GM12878 (cell line): ENCODE measurements at regions of chr2 and their contacts with region 1.

Region 1: DNA sequence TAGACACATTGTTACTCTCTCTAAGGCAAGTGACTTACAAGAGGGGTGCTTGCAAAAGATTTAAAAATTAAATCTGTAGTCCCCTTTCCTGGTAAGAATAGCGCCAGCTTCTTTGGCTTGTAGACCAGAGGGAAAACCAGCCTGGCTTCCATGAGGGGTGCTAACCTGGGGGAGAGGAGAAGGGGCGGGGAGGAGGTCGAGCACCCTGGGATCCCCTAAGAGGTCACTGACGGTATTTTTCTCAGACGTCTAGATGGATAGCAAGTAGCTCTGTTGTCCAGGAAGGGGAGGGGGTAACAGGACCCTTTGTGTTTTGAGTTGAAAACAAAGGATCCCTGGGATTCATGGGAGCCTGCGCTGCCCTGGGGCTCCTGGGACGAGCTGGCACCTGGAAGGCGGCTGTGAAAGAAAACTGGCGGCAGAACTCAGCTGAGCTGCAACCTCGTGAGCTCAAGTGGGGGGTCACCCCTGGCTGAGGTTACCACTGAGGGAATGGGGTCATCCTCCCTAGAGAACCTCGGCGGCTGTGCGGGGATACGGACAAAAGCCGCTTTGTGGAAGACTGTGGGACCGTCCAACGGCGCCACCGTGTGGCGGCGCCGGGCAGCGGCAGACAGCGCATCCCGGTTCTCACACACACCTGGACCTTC is 37.8 kb upstream of the MRPL19 start:
- DNase-seq: no peak
- ATAC-seq: peak; percentile 97
- H3K4me3 ChIP-seq: peak overlapping the region; percentile 49; the same call in 1 of the 2 replicates
- H3K27ac ChIP-seq: no peak overlapping the region
- H3K4me1 ChIP-seq: 0 out of 2 replicates have a peak, but pooled peaks cover 2% of the 10 kb centered on the region
- H3K27me3 ChIP-seq: no peaks in the 10 kb centered on the region
- CTCF ChIP-seq: peak; percentile 96 to 98 (median 98)
- EP300 ChIP-seq: no peak
- POLR2A ChIP-seq: no peak
- RAD21 ChIP-seq: peak; percentile 88

Region 2: GRCh38 chr2:74919827-74920226 is 689.0 kb before region 1 on chr2:
- CTCF ChIA-PET with region 1: interaction called, 21 read pairs
- POLR2A ChIA-PET with region 1: no interaction called
- RAD21 ChIA-PET with region 1: interaction called, 13 read pairs
- SMC1A ChIA-PET with region 1: interaction called, 5 read pairs
- in situ Hi-C with region 1: loop called (anchors 5 kb)
- intact Hi-C with region 1: loop called (anchors 5 kb)
- DNase-seq: no peak
- ATAC-seq: peak; percentile 77
- H3K4me3 ChIP-seq: no peak overlapping the region
- H3K27ac ChIP-seq: no peak overlapping the region
- H3K4me1 ChIP-seq: peaks cover 6% of the 10 kb centered on the region; the same call in 1 of the 2 replicates
- H3K27me3 ChIP-seq: no peaks in the 10 kb centered on the region
- CTCF ChIP-seq: peak; percentile 69 to 85 (median 84)
- EP300 ChIP-seq: no peak
- POLR2A ChIP-seq: no peak
- RAD21 ChIP-seq: peak; percentile 95

Region 3: DNA sequence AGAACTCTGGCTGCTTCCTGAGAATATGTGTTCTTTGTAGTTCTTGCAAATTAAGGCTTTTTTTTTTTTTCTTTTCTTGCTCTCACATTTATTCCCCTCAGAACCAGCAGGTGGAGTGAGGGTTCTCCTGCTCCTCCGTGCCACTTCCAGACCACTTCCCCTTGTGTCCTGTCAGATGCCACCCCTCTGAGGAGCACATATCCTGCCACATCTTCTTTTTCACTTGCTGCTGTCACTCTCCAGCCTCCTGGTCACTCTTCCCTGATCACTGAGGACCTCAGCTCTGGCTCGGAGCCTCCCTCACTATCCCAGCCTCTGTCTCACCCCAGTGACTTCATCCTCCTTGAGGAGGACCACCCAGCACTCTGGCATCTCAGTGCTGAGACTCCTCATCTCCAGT is 510.0 kb before region 1 on chr2:
- CTCF ChIA-PET with region 1: interaction called, 10 read pairs
- POLR2A ChIA-PET with region 1: no interaction called
- RAD21 ChIA-PET with region 1: interaction called, 6 read pairs
- SMC1A ChIA-PET with region 1: interaction called, 4 read pairs
- in situ Hi-C with region 1: no loop called
- intact Hi-C with region 1: no loop called
- DNase-seq: no peak
- ATAC-seq: peak; percentile 87
- H3K4me3 ChIP-seq: no peak overlapping the region
- H3K27ac ChIP-seq: no peak overlapping the region
- H3K4me1 ChIP-seq: no peaks in the 10 kb centered on the region
- H3K27me3 ChIP-seq: no peaks in the 10 kb centered on the region
- CTCF ChIP-seq: peak; percentile 47 to 50 (median 48); a peak in 5 of 6 replicates
- EP300 ChIP-seq: no peak
- POLR2A ChIP-seq: no peak
- RAD21 ChIP-seq: peak; percentile 53

Region 4: DNA sequence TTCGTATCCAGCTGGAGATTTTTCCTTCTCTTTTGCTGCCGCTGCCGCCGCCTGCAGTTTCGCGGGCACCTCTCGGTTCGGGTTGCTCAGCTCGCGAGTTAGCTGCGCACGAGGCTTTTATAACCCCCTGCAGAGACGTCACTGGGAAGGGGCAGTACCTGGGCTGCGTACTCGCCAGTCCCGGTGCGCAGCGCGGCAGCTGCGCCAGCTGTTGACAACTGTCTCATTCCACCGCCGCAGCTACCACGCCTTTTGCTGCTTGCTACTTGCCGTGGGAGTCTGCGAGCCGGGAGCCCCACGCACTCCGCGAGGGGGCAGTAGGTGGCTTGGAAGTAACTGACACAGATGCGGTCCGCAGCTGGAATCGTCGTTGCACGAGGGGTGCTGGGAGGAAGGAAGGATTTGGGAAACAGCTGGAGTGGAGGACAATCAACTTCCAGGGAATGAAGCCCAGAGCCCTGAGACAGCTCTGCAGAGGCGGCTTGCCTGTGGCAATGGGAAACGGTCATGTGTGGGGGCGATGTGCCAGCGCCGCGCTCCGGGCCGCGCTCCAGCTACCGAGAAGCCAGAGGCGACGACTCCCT is 409.3 kb before region 1 on chr2 and contains the start of gene TACR1:
- CTCF ChIA-PET with region 1: interaction called, 17 read pairs
- POLR2A ChIA-PET with region 1: no interaction called
- RAD21 ChIA-PET with region 1: interaction called, 3 read pairs
- SMC1A ChIA-PET with region 1: interaction called, 16 read pairs
- in situ Hi-C with region 1: no loop called
- intact Hi-C with region 1: loop called (anchors 2 kb)
- DNase-seq: peak; percentile 35
- ATAC-seq: peak; percentile 91
- H3K4me3 ChIP-seq: peak within 1 kb of the TSS; percentile 57
- H3K27ac ChIP-seq: no peak within 1 kb of the TSS
- H3K4me1 ChIP-seq: peaks cover 4% of the 10 kb centered on the region; the same call in 1 of the 2 replicates
- H3K27me3 ChIP-seq: peaks cover 5 to 11% of the 10 kb centered on the region in 2 experiments
- CTCF ChIP-seq: peak; percentile 56 to 69 (median 64)
- EP300 ChIP-seq: 0 out of 4 replicates have a peak, but pooled peaks of 1 of the 2 experiments have one; percentile 22
- POLR2A ChIP-seq: no peak
- RAD21 ChIP-seq: peak; percentile 73
- polyA plus RNA-seq, gene TACR1: 0.04 to 0.05 TPM

Region 5: DNA sequence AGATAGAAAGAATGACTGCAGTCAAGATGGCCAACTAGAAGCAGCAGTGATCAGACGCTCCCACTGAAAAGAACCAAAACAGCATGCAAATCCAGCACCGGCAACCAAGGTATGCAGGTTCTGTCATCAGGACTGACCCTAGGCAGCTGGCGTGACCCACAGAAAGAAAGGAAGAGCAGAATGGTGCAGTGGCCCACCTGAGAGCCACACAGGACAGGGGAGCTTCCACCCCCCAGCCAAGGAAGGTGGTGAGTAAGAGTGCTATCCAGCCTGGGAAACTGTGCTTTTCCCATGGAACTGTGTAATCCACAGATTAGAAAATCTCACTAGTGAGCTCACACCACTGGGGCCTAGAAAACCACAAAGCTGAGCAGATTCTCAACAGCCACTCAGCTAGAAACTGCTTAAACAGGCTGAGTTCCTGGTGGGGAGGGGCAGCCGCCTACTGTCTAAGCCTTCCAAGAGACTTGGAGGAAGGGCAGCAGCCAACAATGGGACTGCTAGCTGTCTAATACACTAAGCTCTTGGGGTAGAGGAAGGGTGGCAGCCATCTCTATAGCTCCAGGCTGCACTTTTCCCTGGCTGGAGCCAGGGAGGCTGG is 175.9 kb before region 1 on chr2:
- CTCF ChIA-PET with region 1: interaction called, 12 read pairs
- POLR2A ChIA-PET with region 1: no interaction called
- RAD21 ChIA-PET with region 1: interaction called, 7 read pairs
- SMC1A ChIA-PET with region 1: interaction called, 3 read pairs
- in situ Hi-C with region 1: no loop called
- intact Hi-C with region 1: no loop called
- DNase-seq: peak; percentile 96
- ATAC-seq: peak; percentile 86
- H3K4me3 ChIP-seq: peak overlapping the region; percentile 31
- H3K27ac ChIP-seq: peak overlapping the region; percentile 95
- H3K4me1 ChIP-seq: peaks cover 45% of the 10 kb centered on the region
- H3K27me3 ChIP-seq: no peaks in the 10 kb centered on the region
- CTCF ChIP-seq: no peak
- EP300 ChIP-seq: peak; percentile 50 to 69; a peak in 2 of 4 replicates
- POLR2A ChIP-seq: peak; percentile 66
- RAD21 ChIP-seq: peak; percentile 40

Region 6: DNA sequence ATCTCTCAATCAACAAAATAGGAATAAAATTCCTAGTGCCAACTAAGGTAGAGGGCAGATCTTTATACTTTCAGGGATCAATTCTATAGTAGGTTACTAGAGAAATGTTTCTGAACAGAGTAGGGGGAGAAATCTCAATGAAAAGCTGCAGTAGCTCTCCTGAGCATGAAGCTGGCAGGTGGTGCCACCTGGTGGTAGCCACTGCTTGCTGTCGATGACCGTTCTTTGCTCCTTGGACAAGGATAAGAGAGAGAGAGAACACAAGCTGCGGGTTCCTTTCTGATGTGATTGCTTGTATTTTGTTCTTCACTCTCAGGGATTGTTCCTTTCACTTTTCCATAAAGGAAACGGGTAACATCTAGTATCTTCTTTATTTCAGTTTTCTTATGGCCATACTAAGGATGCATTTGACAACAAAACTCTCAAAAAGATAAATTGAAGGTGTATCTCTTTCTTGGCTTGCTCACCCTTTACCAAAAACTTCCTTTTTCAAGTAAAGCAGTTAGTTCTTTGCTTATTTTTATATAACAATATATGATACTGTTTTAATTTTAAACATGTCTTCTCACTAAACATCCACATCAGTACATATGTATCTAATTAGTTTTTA is 19.2 kb after region 1 on chr2:
- CTCF ChIA-PET with region 1: interaction called, 12 read pairs
- POLR2A ChIA-PET with region 1: no interaction called
- RAD21 ChIA-PET with region 1: interaction called, 5 read pairs
- SMC1A ChIA-PET with region 1: interaction called, 5 read pairs
- in situ Hi-C with region 1: no loop called
- intact Hi-C with region 1: no loop called
- DNase-seq: no peak
- ATAC-seq: peak; percentile 96
- H3K4me3 ChIP-seq: no peak overlapping the region
- H3K27ac ChIP-seq: no peak overlapping the region
- H3K4me1 ChIP-seq: no peaks in the 10 kb centered on the region
- H3K27me3 ChIP-seq: peaks cover 0 to 2% of the 10 kb centered on the region in 2 experiments; a peak in 1 of 4 replicates
- CTCF ChIP-seq: peak; percentile 86 to 97 (median 91)
- EP300 ChIP-seq: no peak
- POLR2A ChIP-seq: no peak
- RAD21 ChIP-seq: peak; percentile 80

Region 7: GRCh38 chr2:75698918-75699317 is 90.1 kb after region 1 on chr2:
- CTCF ChIA-PET with region 1: no interaction called
- POLR2A ChIA-PET with region 1: no interaction called
- RAD21 ChIA-PET with region 1: no interaction called
- SMC1A ChIA-PET with region 1: no interaction called
- in situ Hi-C with region 1: no loop called
- intact Hi-C with region 1: no loop called
- DNase-seq: no peak
- ATAC-seq: no peak
- H3K4me3 ChIP-seq: no peak overlapping the region
- H3K27ac ChIP-seq: no peak overlapping the region
- H3K4me1 ChIP-seq: no peaks in the 10 kb centered on the region
- H3K27me3 ChIP-seq: no peaks in the 10 kb centered on the region
- CTCF ChIP-seq: no peak
- EP300 ChIP-seq: no peak
- POLR2A ChIP-seq: no peak
- RAD21 ChIP-seq: no peak

Region 8: GRCh38 chr2:75716406-75716805 is 107.6 kb after region 1 on chr2:
- CTCF ChIA-PET with region 1: no interaction called
- POLR2A ChIA-PET with region 1: no interaction called
- RAD21 ChIA-PET with region 1: no interaction called
- SMC1A ChIA-PET with region 1: no interaction called
- in situ Hi-C with region 1: no loop called
- intact Hi-C with region 1: no loop called
- DNase-seq: no peak
- ATAC-seq: no peak
- H3K4me3 ChIP-seq: no peak overlapping the region
- H3K27ac ChIP-seq: no peak overlapping the region
- H3K4me1 ChIP-seq: peaks cover under 1% of the 10 kb centered on the region; the same call in 1 of the 2 replicates
- H3K27me3 ChIP-seq: no peaks in the 10 kb centered on the region
- CTCF ChIP-seq: no peak; a peak in 1 of 6 replicates
- EP300 ChIP-seq: no peak
- POLR2A ChIP-seq: no peak
- RAD21 ChIP-seq: 0 out of 2 replicates have a peak, but pooled peaks have one; percentile 8

Region 9: GRCh38 chr2:75896779-75897366 is 288.1 kb after region 1 on chr2:
- CTCF ChIA-PET with region 1: no interaction called
- POLR2A ChIA-PET with region 1: no interaction called
- RAD21 ChIA-PET with region 1: no interaction called
- SMC1A ChIA-PET with region 1: no interaction called
- in situ Hi-C with region 1: no loop called
- intact Hi-C with region 1: no loop called
- DNase-seq: no peak
- ATAC-seq: peak; percentile 92
- H3K4me3 ChIP-seq: no peak overlapping the region
- H3K27ac ChIP-seq: no peak overlapping the region
- H3K4me1 ChIP-seq: no peaks in the 10 kb centered on the region
- H3K27me3 ChIP-seq: no peaks in the 10 kb centered on the region
- CTCF ChIP-seq: peak; percentile 74 to 88 (median 79)
- EP300 ChIP-seq: no peak
- POLR2A ChIP-seq: no peak
- RAD21 ChIP-seq: peak; percentile 59